ENCODE measurements at regions of chr11 and their contacts with region 1.

Region 1: GRCh38 chr11:31875866-31876560 is 64.9 kb upstream of the PAX6 start:
- DNase-seq: no peak
- ATAC-seq: peak; percentile 56
- H3K4me3 Mint-ChIP-seq: no peak overlapping the region
- H3K27ac Mint-ChIP-seq: no peak overlapping the region; the same call in 1 of the 2 replicates
- H3K4me1 Mint-ChIP-seq: peaks cover 44% of the 10 kb centered on the region
- H3K27me3 Mint-ChIP-seq: peaks cover 20% of the 10 kb centered on the region
- CTCF ChIP-seq: no peak

Region 2: GRCh38 chr11:31863170-31863832 is 12.7 kb before region 1 on chr11:
- CTCF ChIA-PET with region 1: no interaction called
- POLR2A ChIA-PET with region 1: no interaction called
- DNase-seq: no peak
- ATAC-seq: peak; percentile 85
- H3K4me3 Mint-ChIP-seq: no peak overlapping the region
- H3K27ac Mint-ChIP-seq: peak overlapping the region; percentile 68
- H3K4me1 Mint-ChIP-seq: peaks cover 24% of the 10 kb centered on the region
- H3K27me3 Mint-ChIP-seq: peaks cover 11% of the 10 kb centered on the region
- CTCF ChIP-seq: no peak

Region 3: GRCh38 chr11:31887180-31887579 is 11.2 kb after region 1 on chr11:
- CTCF ChIA-PET with region 1: interaction called, 39 read pairs
- POLR2A ChIA-PET with region 1: no interaction called
- DNase-seq: peak; percentile 82
- ATAC-seq: peak; percentile 70
- H3K4me3 Mint-ChIP-seq: no peak overlapping the region
- H3K27ac Mint-ChIP-seq: no peak overlapping the region
- H3K4me1 Mint-ChIP-seq: peaks cover 55% of the 10 kb centered on the region
- H3K27me3 Mint-ChIP-seq: peaks cover 11% of the 10 kb centered on the region
- CTCF ChIP-seq: peak; percentile 52

Measured in WTC11 (cell line).